ENCODE measurements at regions of chr18 and their contacts with region 1.

Region 1: GRCh38 chr18:62165583-62165982 is 21.3 kb downstream of the PIGN start:
- DNase-seq: no peak
- ATAC-seq: no peak
- H3K4me3 Mint-ChIP-seq: no peak overlapping the region
- H3K27ac Mint-ChIP-seq: no peak overlapping the region
- H3K4me1 Mint-ChIP-seq: peaks cover 12% of the 10 kb centered on the region
- H3K27me3 Mint-ChIP-seq: no peaks in the 10 kb centered on the region

Region 2: DNA sequence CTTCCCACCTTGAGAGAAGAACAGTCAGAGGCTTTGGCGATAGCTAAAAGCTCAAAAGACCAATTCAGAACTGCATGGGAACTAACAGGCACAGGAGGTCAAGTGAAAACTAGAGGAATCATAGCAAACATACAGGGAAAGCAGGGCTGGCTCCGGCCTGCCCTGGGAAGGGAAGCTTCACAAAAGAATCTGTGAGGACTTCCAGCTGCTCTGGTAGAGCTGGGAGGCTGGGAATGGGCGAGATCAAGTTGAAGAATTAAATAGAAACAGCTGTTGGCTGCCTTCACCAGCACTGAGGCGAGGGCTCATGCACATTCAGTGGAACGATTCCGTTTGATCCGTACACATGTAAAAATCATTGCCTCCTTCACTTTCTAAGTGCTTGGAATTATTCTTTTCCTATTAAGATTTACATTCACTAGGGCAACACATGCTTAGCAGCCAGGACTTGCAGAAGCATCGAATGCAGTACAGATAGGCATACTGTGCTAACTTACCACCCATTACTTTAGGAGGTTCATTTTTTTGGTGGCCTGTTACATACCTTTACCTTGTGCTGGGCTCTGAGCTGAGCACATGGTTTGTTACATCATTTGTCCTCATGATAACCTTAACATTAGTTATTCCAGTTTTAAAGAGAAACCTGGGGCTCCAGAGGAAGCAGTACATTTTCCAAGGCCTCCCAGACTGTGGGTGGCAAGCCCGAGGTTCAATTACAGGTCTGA is 147.4 kb before region 1 on chr18:
- CTCF ChIA-PET with region 1: no interaction called
- POLR2A ChIA-PET with region 1: no interaction called
- intact Hi-C with region 1: no loop called
- DNase-seq: no peak
- ATAC-seq: no peak
- H3K4me3 Mint-ChIP-seq: no peak overlapping the region
- H3K27ac Mint-ChIP-seq: no peak overlapping the region
- H3K4me1 Mint-ChIP-seq: peaks cover 3% of the 10 kb centered on the region
- H3K27me3 Mint-ChIP-seq: peaks cover 3% of the 10 kb centered on the region

Region 3: DNA sequence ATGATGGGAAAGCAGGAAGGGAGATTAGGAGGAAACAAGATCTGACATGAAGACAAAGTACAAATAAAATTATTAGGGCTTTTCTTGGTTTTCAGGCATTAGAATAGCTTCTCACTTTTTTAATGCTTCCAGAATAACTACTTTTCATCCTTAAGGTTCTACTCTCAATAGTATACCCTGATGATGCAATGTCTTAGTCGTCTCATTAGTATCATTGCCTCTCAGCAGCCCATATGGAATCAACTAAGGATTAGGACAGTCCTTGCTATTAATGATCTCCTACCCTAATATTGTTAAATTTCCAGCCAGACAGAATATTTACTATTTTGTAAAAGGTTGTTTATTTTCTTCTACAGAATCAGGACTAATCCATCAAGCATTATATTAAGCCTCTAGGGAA is 77.4 kb after region 1 on chr18:
- CTCF ChIA-PET with region 1: no interaction called
- POLR2A ChIA-PET with region 1: no interaction called
- intact Hi-C with region 1: no loop called
- DNase-seq: no peak
- ATAC-seq: no peak
- H3K4me3 Mint-ChIP-seq: no peak overlapping the region
- H3K27ac Mint-ChIP-seq: no peak overlapping the region
- H3K4me1 Mint-ChIP-seq: peaks cover 3% of the 10 kb centered on the region
- H3K27me3 Mint-ChIP-seq: no peaks in the 10 kb centered on the region

Region 4: DNA sequence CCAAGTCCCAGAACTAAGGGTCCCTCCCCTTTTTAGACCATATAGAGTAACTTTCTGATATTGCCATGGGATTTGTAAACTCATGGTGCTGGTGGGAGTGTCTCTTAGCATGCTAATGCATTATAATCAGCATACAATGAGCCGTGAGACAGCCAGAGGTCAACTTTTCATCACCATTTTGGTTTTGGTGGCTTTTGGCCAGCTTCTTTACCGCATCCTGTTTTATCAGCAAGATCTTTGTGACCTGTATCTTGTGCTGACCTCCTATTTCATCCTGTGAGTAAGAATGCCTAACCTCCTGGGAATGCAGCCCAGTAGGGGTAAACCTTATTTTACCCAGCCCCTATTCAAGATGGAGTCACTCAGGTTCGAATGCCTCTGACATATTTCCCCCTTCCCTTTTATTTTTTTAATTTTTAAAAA is 698.0 kb after region 1 on chr18:
- CTCF ChIA-PET with region 1: no interaction called
- POLR2A ChIA-PET with region 1: interaction called, 10 read pairs
- intact Hi-C with region 1: no loop called
- DNase-seq: no peak
- ATAC-seq: no peak
- H3K4me3 Mint-ChIP-seq: no peak overlapping the region
- H3K27ac Mint-ChIP-seq: no peak overlapping the region
- H3K4me1 Mint-ChIP-seq: no peaks in the 10 kb centered on the region
- H3K27me3 Mint-ChIP-seq: no peaks in the 10 kb centered on the region